ENCODE measurements at regions of chr7 and their contacts with region 1.

Region 1: DNA sequence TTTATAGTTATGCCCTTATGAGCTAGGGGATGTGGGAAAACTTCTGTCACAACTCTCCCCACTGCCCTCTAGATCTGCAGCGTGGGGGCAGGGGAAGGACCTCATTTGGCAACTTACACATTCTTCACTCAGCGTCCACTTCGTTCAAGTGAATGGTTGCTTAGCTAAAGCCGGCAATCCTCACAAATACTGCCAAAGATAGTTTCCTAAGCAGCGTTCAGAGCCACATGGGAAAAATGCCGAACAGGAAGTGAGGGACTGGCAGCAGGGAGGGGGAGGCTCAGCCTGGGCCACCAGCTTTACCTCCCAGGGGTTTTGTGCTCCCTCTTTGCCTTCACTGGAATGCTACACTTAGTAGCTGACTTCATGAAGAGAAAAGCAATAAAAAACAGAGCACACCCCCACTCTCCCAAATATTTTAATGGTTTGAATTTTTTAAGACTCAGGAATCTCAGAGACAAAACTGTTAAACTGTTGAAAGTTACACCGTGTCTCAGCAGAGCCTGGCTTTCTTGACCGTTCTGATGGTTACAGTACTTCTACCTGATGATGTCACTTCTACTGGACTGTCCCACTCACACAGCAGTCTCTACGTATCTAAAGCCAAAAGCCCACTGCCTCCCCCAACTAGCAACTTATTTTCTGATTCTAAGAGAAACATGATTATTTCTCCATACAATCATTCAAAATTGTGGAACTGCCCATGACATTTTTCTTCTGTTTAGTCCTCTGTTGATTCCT is 10.4 kb downstream of the GRM3 start:
- DNase-seq: no peak
- H3K4me3 ChIP-seq: no peak overlapping the region
- H3K27ac ChIP-seq: no peak overlapping the region
- H3K4me1 ChIP-seq: no peaks in the 10 kb centered on the region
- H3K27me3 ChIP-seq: no peaks in the 10 kb centered on the region
- CTCF ChIP-seq: no peak
- EP300 ChIP-seq: no peak
- POLR2A ChIP-seq: no peak

Region 2: DNA sequence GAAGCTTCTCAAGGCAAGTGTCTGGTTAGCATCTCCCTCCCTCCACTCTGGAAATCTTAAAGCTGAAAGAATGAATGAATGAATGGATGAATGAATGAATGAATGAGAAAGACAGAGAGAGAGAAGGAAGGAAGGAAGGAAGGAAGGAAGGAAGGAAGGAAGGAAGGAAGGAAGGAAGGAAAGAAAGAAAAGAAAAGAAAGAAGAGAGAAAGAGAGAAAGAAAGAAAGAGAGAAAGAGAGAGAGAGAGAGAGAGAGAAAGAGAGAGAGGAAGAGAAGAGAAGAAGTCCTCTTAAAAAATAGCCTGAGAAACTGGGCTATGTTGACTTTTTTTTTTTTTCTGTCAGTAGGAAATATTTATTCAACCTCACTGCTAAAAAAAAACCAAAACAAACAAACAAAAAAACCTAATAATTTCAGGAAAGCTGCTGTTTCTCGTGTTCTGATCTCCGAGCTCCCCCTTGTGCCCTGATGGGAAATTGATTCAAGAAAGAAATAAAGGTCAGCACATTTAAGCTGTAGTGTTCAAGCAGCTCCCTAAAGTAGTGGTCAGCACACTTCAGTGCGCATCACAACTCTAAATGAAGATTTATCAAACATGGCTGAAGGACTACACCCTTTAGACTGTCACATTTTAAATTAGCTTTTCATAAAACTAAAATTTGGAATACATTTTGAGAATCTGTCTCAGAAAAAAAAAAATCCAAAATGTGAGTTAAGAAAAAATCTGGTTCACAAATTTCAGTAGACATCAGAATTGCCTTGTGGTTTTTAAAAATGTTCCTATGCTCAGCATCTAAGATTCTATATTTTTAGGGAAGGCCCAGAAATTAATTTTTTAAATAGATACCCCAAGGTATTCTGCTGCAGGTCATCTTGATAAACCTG is 251.1 kb after region 1 on chr7:
- in situ Hi-C with region 1: loop called in 1 of 4 experiments (anchors 25 kb)
- intact Hi-C with region 1: no loop called
- DNase-seq: no peak
- H3K4me3 ChIP-seq: no peak overlapping the region
- H3K27ac ChIP-seq: no peak overlapping the region
- H3K4me1 ChIP-seq: no peaks in the 10 kb centered on the region
- H3K27me3 ChIP-seq: no peaks in the 10 kb centered on the region
- CTCF ChIP-seq: peak; percentile 28 to 54 (median 48)
- EP300 ChIP-seq: no peak
- POLR2A ChIP-seq: no peak

Region 3: GRCh38 chr7:87267239-87267900 is 613.3 kb after region 1 on chr7:
- in situ Hi-C with region 1: no loop called
- intact Hi-C with region 1: no loop called
- DNase-seq: no peak
- H3K4me3 ChIP-seq: no peak overlapping the region
- H3K27ac ChIP-seq: no peak overlapping the region
- H3K4me1 ChIP-seq: no peaks in the 10 kb centered on the region
- H3K27me3 ChIP-seq: no peaks in the 10 kb centered on the region
- CTCF ChIP-seq: no peak
- EP300 ChIP-seq: no peak
- POLR2A ChIP-seq: no peak